SK-MEL-5 (cell line): ENCODE measurements at regions of chr17 and their contacts with region 1.

Region 1: GRCh38 chr17:74305865-74306654 is 20.0 kb upstream of the KIF19 start:
- DNase-seq: peak; percentile 62

Region 2: GRCh38 chr17:74203439-74204240 is 102.4 kb before region 1 on chr17 and contains the start of gene RPL38:
- in situ Hi-C with region 1: no loop called
- DNase-seq: peak; percentile 100
- total RNA-seq, gene RPL38: 7,933 and 8,102 TPM in 2 replicates

Region 3: GRCh38 chr17:74345433-74346241 is 39.6 kb after region 1 on chr17:
- in situ Hi-C with region 1: loop called (anchors 5 kb)
- DNase-seq: no peak

Region 4: DNA sequence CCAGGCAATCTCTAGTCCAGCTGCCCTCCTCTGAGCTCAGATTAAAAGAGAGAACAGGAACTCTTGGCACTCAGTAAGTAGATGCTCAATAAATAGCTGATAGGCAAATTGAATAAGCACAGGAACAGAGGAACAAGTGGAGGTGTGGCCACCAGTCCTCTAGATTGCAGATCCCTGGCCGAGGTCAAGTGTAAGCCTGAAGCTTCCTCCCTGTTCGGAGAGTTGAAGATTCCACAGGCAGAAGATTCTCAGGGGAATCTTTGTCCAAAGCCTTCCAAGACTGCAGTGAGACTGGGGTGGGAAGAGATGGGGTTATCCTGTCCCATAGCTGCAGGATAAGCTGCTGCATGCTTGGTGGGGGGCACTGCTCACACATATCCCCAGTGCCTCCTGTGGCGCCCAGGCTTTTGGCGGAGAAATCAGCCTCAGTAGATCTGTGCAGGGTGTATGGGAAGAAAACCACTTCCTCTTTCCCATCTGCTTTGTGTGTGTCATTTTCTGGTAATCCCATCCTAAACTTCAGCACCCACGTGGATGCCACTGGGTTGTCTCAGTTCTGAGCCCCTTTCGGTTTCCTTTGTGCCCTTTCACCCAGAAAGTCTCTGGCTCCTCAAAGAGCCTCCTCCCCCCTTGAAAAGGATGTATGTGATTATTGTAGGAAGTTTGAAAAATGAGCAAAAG is 172.5 kb after region 1 on chr17:
- in situ Hi-C with region 1: loop called (anchors 10 kb)
- DNase-seq: no peak

Region 5: GRCh38 chr17:74759243-74759801 is 453.3 kb after region 1 on chr17:
- in situ Hi-C with region 1: no loop called
- DNase-seq: no peak